Head of caudate nucleus (tissue), 42 donors: ENCODE measurements at regions of chr3 and their contacts with region 1.

Region 1: DNA sequence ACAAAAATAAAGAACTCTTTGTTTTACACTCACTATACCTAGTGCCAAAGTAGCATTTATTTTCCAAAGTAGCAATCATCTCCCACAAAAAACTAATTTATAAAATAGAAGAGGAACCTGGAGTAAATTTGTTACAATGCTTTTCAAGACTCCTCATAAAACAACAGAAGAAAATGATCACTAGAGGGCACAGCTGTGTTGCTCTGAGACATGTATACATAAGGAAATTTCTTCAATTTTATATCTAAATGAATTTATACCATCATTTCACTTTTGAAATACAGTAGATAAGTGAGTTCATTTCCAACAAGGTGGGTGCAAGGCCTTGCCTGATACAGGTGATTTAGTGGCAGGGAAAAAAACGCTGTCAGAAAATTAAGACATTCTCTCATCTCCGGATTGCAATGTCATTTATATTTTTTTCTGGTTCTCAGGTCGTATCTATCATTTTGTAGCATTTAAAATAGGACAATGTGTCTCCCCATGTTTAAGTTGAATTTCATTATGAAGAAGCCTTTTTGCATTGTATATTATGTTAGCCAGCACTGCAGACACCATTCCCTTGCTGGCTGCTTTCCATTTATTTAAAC is 25.3 kb upstream of the ARHGEF26 start:
- DNase-seq: peak in 1 of 42 donors; percentile 17

Region 2: DNA sequence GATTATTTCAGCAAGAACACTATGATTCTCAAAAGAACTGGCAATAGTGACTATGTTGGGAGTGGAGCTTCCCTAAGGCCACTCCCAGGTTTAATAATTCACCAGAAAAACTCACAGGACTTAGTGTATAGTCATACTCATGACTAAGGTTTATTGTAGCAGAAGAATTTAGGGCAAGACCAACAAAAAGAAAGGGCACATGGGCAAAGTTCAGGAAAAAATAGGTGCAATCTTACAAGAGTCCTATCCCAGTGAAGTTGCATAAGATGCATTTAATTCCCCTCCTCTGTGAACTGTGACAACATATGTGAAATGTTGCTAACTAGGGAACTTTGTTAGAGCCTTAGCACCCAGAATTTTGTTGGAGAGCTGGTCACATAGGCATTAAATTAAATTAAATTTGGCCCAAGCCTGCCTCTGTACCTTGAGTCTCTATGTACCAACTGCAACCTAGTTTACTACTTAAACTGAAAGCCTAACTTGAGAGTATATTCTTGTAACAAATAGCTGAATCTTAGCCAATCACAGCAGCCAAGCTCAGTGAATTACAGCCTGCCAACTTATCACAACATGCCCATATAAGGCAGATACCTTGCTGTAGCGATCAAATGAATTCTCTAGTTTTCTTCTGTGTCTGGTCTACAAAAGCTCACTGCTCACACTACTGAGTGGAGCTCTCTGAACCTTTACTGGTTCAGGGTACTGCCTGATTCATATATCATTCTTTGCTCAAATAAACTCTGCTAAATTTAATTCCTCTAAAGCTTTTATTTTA is 361.0 kb before region 1 on chr3:
- intact Hi-C with region 1: no loop called
- DNase-seq: no peak

Region 3: GRCh38 chr3:154252759-154253638 is 157.1 kb after region 1 on chr3:
- intact Hi-C with region 1: loop called (anchors 5 kb)
- DNase-seq: peak; percentile 76 to 96 (median 90)